ENCODE measurements at regions of chr4 and their contacts with region 1.

Region 1: DNA sequence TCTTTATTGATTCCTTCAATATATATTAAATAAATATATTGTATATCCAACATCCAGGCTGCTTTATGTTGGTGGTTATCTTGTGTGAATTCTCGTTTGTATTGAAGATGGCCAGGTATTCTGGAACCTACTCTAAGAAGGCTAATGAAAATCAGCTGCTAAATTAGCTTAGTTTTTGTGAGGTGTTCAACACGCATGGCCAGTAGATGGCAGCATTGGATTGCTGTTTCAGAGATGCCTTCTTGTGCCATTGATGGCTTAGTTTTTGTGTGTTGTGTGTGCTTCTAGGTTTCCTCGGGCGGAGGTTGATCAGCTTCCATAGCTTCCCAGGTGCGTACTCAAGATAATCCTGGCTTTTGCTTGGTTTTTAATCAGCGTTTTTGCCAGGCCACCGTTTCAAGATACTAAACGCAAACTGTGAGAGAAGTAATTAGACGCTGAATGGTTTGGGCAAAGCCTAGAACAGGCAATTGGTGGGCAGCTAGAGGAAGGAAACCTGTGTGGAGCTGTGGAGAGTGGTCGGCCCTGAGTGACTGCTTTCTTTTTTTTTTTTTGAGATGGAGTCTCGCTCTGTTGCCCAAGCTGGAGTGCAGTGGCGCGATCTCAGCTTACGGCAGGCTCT is 15.1 kb downstream of the NOCT start:
- DNase-seq: peak; percentile 45 to 81 (median 74)
- ATAC-seq: peak; percentile 86
- H3K4me3 ChIP-seq: no peak overlapping the region
- H3K4me3 Mint-ChIP-seq: peak overlapping the region in 5 of 10 donors; percentile 3 to 58 (median 18)
- H3K27ac ChIP-seq: no peak overlapping the region
- H3K27ac Mint-ChIP-seq: peak overlapping the region in 2 of 9 donors; percentile 0 to 1
- H3K4me1 ChIP-seq: no peaks in the 10 kb centered on the region
- H3K4me1 Mint-ChIP-seq: peaks cover 5 to 20% (median 11%) of the 10 kb centered on the region in 7 donors
- H3K27me3 ChIP-seq: no peaks in the 10 kb centered on the region
- H3K27me3 Mint-ChIP-seq: no peaks in the 10 kb centered on the region

Region 2: DNA sequence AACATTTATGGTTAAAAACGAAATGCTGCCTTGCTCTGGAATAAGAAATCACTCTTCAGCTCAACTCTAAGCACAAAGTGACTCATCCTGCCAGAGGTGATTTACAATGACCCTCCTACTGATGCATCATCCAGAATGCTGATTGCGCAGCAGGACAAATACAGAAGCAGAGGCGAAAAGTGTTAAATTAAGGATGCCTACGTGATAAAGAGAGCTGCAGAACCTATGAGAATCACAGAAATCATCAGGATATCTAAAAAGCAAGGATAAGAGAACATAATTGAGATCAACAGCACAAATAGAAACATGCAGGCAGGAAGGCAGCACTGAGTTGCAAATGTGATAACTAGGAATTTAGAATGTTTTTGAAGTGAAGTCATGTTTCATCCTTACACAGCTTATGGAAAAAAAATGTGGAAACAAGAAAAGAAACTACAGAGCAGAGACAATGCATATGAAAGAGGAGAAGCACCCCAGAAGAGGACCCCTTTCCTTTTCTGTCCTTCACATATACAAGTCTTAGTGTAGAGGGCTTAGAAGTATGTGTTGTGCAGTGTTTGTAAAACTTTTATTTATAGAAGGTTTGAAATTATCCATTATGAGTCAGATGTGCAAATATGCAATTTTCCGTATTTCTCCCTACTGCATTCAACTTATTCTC is 977.0 kb before region 1 on chr4:
- CTCF ChIA-PET with region 1: no interaction called
- POLR2A ChIA-PET with region 1: no interaction called
- intact Hi-C with region 1: no loop called
- DNase-seq: no peak
- ATAC-seq: no peak
- H3K4me3 ChIP-seq: no peak overlapping the region
- H3K4me3 Mint-ChIP-seq: no peak overlapping the region
- H3K27ac ChIP-seq: no peak overlapping the region
- H3K27ac Mint-ChIP-seq: no peak overlapping the region
- H3K4me1 ChIP-seq: no peaks in the 10 kb centered on the region
- H3K4me1 Mint-ChIP-seq: no peaks in the 10 kb centered on the region
- H3K27me3 ChIP-seq: no peaks in the 10 kb centered on the region
- H3K27me3 Mint-ChIP-seq: no peaks in the 10 kb centered on the region

Region 3: DNA sequence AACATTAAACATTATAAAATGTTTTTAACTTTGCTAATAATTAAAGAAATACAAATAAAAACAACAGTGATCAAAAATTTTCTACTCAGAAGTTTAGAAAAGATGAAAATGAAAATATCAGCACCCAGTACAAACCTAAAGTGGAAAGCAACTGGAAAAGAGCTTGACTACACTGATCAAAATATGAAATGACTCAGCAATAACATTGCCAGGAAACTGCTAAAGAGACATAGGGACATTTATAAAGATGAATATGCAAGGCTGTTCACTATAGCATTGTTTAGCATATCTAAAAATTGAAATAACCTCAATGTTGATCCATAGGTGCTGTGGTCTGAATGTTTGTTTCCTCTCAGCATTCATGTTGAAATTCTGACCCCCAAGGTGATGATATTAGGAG is 103.7 kb before region 1 on chr4:
- CTCF ChIA-PET with region 1: no interaction called
- POLR2A ChIA-PET with region 1: no interaction called
- intact Hi-C with region 1: no loop called
- DNase-seq: no peak
- ATAC-seq: no peak
- H3K4me3 ChIP-seq: no peak overlapping the region
- H3K4me3 Mint-ChIP-seq: no peak overlapping the region
- H3K27ac ChIP-seq: no peak overlapping the region
- H3K27ac Mint-ChIP-seq: no peak overlapping the region
- H3K4me1 ChIP-seq: no peaks in the 10 kb centered on the region
- H3K4me1 Mint-ChIP-seq: no peaks in the 10 kb centered on the region
- H3K27me3 ChIP-seq: no peaks in the 10 kb centered on the region
- H3K27me3 Mint-ChIP-seq: no peaks in the 10 kb centered on the region

Region 4: DNA sequence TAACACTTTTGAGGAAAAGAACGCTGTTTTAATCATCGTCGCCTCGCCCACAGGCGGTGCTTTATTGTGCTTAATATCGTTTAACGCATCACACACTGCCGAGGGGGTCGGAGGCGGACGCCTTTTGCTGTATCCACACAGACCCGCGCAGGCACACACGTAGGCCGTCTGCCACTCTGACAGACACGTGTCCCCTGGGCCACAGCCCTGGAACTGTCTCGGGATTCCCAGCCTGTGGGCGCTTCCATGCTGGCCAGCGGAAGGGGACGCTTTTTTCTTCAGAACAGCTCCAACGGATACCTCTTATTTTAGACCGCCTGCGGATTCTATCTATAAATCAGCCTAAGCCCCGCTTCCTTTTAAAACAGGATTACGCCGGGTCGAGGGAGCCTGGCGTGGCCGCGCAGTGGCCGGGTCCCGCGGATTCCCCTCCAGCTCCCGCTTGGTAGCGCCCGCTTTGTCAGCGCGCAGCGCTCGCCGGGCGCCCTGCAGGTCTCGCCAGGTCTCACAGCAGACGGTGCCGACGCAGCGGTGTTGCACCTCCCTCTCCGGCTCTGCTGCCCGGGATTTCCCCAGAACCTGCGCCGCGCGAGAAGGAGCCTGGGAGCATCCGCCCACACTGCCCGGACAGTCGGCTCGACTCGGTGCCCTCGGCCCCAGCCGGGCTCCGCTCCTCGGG is 15.3 kb before region 1 on chr4 and contains the start of gene NOCT:
- CTCF ChIA-PET with region 1: interaction called, 13 read pairs
- POLR2A ChIA-PET with region 1: interaction called, 3 read pairs
- intact Hi-C with region 1: loop called (anchors 1 kb)
- DNase-seq: peak; percentile 82 to 92 (median 89)
- ATAC-seq: peak; percentile 94
- H3K4me3 ChIP-seq: peak within 1 kb of the TSS; percentile 65
- H3K4me3 Mint-ChIP-seq: peak within 1 kb of the TSS; percentile 82 to 93 (median 88)
- H3K27ac ChIP-seq: peak within 1 kb of the TSS; percentile 91
- H3K27ac Mint-ChIP-seq: peak within 1 kb of the TSS; percentile 76 to 99 (median 94)
- H3K4me1 ChIP-seq: peaks cover 7 to 10% of the 10 kb centered on the region in 2 donors
- H3K4me1 Mint-ChIP-seq: peaks cover 14 to 44% (median 24%) of the 10 kb centered on the region in 7 donors
- H3K27me3 ChIP-seq: no peaks in the 10 kb centered on the region
- H3K27me3 Mint-ChIP-seq: no peaks in the 10 kb centered on the region
- total RNA-seq, gene NOCT: 1.6 to 33.7 (median 8.8) TPM

Region 5: DNA sequence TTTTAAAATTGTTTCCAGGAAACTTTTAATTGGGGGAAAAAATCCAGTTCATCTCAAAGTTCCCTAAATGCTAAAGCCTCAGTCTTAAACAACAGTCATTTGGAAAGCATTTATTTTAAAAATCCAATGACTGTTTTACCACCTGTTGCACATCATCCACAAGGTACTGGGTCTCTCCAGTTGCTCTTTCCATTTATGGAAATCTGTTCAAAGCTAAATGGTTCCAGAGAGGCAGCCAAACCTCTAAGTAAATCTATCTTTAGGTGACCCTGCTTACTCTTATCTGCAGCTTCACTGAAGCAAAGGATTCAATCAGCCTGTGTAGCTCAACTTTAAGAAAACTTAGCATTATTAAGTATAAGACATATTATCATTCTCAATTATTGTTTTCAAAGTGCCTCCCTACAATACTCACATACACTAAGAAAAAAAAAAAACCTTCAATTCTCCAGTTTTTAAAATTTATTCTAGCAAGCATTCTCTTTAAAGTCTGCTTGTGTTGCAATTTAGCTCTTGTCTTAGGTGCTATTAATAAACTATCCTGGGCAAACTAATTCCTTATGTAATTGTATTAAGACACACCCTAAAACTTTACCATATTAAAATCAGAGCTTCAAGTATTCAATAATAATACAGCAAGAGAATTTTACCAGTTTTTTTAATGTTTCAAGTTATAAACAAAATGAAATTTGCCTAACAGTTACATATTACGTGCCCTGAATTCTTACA is 45.5 kb after region 1 on chr4:
- CTCF ChIA-PET with region 1: interaction called, 18 read pairs
- POLR2A ChIA-PET with region 1: no interaction called
- intact Hi-C with region 1: no loop called
- DNase-seq: no peak
- ATAC-seq: no peak
- H3K4me3 ChIP-seq: no peak overlapping the region
- H3K4me3 Mint-ChIP-seq: peak overlapping the region in 2 of 10 donors; percentile 27 to 30
- H3K27ac ChIP-seq: no peak overlapping the region
- H3K27ac Mint-ChIP-seq: peak overlapping the region in 2 of 9 donors; percentile 20 to 48
- H3K4me1 ChIP-seq: peaks cover 10 to 23% of the 10 kb centered on the region in 2 donors
- H3K4me1 Mint-ChIP-seq: peaks cover 20 to 81% (median 67%) of the 10 kb centered on the region in 7 donors
- H3K27me3 ChIP-seq: no peaks in the 10 kb centered on the region
- H3K27me3 Mint-ChIP-seq: no peaks in the 10 kb centered on the region

Region 6: GRCh38 chr4:139099366-139099982 is 68.7 kb after region 1 on chr4:
- CTCF ChIA-PET with region 1: interaction called, 14 read pairs
- POLR2A ChIA-PET with region 1: no interaction called
- intact Hi-C with region 1: loop called (anchors 1 kb)
- DNase-seq: peak; percentile 37 to 81 (median 71)
- ATAC-seq: peak; percentile 94
- H3K4me3 ChIP-seq: no peak overlapping the region
- H3K4me3 Mint-ChIP-seq: no peak overlapping the region
- H3K27ac ChIP-seq: no peak overlapping the region
- H3K27ac Mint-ChIP-seq: no peak overlapping the region
- H3K4me1 ChIP-seq: no peaks in the 10 kb centered on the region
- H3K4me1 Mint-ChIP-seq: peaks cover 0 to 6% (median 0%) of the 10 kb centered on the region in 7 donors
- H3K27me3 ChIP-seq: no peaks in the 10 kb centered on the region
- H3K27me3 Mint-ChIP-seq: no peaks in the 10 kb centered on the region

Region 7: DNA sequence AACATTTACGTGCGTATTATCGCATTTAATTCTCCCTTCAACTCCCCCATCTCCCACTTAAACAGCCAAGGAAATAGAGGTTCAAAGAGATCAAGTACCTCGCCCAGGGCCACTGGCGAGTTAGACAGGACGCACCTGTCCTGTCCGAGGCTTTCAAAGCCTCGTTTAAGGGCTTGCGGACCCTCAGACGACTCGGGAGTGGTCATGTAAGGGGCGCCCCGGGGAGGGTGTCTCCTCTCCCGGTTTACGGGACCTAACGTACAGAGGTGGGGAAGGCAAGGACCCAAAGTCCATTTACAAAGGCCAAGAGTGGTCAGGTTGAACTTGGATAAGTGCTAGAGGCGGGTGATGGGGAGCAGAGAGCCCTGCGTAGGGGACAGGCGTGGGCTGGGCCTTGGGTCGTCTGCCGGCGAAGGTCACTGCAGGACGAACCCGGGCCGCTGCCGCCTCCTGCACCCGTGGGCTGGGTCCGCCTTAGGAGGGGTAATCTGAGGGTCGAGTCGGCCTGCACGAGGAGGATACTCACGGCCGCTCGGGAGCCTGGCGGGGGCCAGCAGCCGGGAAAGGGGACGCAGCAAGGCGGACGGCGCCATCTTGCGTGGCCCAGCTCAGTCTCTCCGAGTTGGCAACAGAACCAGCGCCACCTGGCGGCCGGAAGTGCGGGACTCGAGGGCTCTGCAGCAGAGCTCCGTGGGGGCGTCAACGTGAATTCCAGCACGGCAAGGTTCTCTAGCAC is 264.6 kb after region 1 on chr4:
- CTCF ChIA-PET with region 1: interaction called, 19 read pairs
- POLR2A ChIA-PET with region 1: interaction called, 7 read pairs
- intact Hi-C with region 1: loop called (anchors 1 to 2 kb)
- DNase-seq: peak; percentile 90 to 99 (median 94)
- ATAC-seq: peak; percentile 99
- H3K4me3 ChIP-seq: peak overlapping the region; percentile 97
- H3K4me3 Mint-ChIP-seq: peak overlapping the region; percentile 86 to 100 (median 96)
- H3K27ac ChIP-seq: peak overlapping the region; percentile 94
- H3K27ac Mint-ChIP-seq: peak overlapping the region; percentile 93 to 100 (median 97)
- H3K4me1 ChIP-seq: peaks cover 13 to 28% of the 10 kb centered on the region in 2 donors
- H3K4me1 Mint-ChIP-seq: peaks cover 2 to 62% (median 40%) of the 10 kb centered on the region in 7 donors
- H3K27me3 ChIP-seq: no peaks in the 10 kb centered on the region
- H3K27me3 Mint-ChIP-seq: no peaks in the 10 kb centered on the region

Region 8: GRCh38 chr4:139416073-139416673 is 385.4 kb after region 1 on chr4:
- CTCF ChIA-PET with region 1: interaction called, 4 read pairs
- POLR2A ChIA-PET with region 1: no interaction called
- intact Hi-C with region 1: loop called in 1 of 2 experiments (anchors 1 kb)
- DNase-seq: peak in 6 of 9 donors; percentile 5 to 46 (median 43)
- ATAC-seq: peak; percentile 72
- H3K4me3 ChIP-seq: no peak overlapping the region
- H3K4me3 Mint-ChIP-seq: no peak overlapping the region
- H3K27ac ChIP-seq: no peak overlapping the region
- H3K27ac Mint-ChIP-seq: no peak overlapping the region
- H3K4me1 ChIP-seq: no peaks in the 10 kb centered on the region
- H3K4me1 Mint-ChIP-seq: peaks cover 0 to 19% (median 12%) of the 10 kb centered on the region in 7 donors
- H3K27me3 ChIP-seq: no peaks in the 10 kb centered on the region
- H3K27me3 Mint-ChIP-seq: no peaks in the 10 kb centered on the region

Measured in naive thymus-derived CD4-positive, alpha-beta T cell (primary cell).